Mammary epithelial cell (primary cell): ENCODE measurements at regions of chr6 and their contacts with region 1.

Region 1: DNA sequence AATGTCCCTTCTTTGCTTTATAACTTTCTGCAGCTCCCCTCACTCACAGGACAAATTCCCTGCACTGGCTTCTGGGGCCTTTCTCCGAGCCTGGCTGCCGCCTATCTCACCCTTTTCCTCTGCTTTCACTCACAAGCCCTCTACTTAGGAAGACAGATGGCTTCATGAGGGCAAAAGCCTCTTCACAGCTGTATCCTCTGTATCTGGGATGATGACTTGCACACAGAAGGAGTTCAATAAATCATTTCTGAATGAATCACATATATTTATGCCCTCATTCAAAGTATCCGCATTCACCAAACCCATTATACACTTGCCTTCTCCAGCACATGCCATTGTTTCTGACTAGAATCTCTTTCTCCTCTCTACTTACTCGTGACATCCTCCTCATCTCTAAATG is 159.0 kb upstream of the RIPOR2 start:
- DNase-seq: no peak
- H3K4me3 ChIP-seq: no peak overlapping the region
- H3K27ac ChIP-seq: no peak overlapping the region
- H3K4me1 ChIP-seq: no peaks in the 10 kb centered on the region
- H3K27me3 ChIP-seq: no peaks in the 10 kb centered on the region
- CTCF ChIP-seq: no peak

Region 2: GRCh38 chr6:24980507-24981387 is 114.0 kb before region 1 on chr6:
- CTCF ChIA-PET with region 1: no interaction called
- dilution Hi-C with region 1: no loop called
- in situ Hi-C with region 1: no loop called
- intact Hi-C with region 1: no loop called
- DNase-seq: peak; percentile 26
- H3K4me3 ChIP-seq: no peak overlapping the region
- H3K27ac ChIP-seq: no peak overlapping the region
- H3K4me1 ChIP-seq: peaks cover 31% of the 10 kb centered on the region
- H3K27me3 ChIP-seq: no peaks in the 10 kb centered on the region
- CTCF ChIP-seq: no peak

Region 3: GRCh38 chr6:25186919-25187318 is 92.2 kb after region 1 on chr6:
- CTCF ChIA-PET with region 1: no interaction called
- dilution Hi-C with region 1: loop called (anchors 5 kb)
- in situ Hi-C with region 1: no loop called
- intact Hi-C with region 1: no loop called
- DNase-seq: peak; percentile 11
- H3K4me3 ChIP-seq: no peak overlapping the region
- H3K27ac ChIP-seq: no peak overlapping the region
- H3K4me1 ChIP-seq: peaks cover 4% of the 10 kb centered on the region
- H3K27me3 ChIP-seq: no peaks in the 10 kb centered on the region
- CTCF ChIP-seq: no peak